ENCODE measurements at regions of chr11 and their contacts with region 1.

Region 1: GRCh38 chr11:14907411-14908213 is 15.6 kb upstream of the CYP2R1 start:
- DNase-seq: peak; percentile 49

Region 2: GRCh38 chr11:14623036-14623435 is 284.6 kb before region 1 on chr11:
- CTCF ChIA-PET with region 1: interaction called, 14 read pairs
- POLR2A ChIA-PET with region 1: no interaction called
- DNase-seq: no peak

Region 3: DNA sequence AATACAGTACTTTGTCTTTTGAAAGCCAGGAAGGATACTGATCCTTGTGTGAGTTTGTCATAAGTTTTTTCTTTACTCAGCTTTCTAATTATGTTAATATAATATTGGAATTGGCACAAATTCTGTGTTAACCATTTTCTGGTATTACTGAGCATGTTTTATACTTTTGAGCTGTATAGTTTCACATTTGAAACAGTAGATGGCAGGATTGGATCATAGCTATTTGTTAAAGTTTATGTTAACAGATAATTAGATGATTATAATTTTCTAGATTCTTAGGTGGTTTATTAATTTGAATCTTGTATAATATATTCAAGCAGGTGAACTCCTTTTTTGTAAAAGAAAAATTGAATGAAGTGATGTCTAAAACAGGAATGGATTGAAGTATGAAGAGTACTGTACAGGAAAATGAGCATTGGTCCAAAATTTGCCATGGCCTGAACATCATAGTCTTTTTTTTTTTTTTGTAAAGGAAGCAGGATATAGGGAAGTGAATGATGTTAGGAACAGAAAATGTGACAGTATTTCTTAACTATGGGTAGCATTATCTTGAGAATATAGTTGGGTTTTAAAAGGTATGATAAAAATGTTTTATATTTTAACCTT is 117.6 kb before region 1 on chr11:
- CTCF ChIA-PET with region 1: interaction called, 74 read pairs
- POLR2A ChIA-PET with region 1: interaction called, 9 read pairs
- DNase-seq: no peak

Region 4: DNA sequence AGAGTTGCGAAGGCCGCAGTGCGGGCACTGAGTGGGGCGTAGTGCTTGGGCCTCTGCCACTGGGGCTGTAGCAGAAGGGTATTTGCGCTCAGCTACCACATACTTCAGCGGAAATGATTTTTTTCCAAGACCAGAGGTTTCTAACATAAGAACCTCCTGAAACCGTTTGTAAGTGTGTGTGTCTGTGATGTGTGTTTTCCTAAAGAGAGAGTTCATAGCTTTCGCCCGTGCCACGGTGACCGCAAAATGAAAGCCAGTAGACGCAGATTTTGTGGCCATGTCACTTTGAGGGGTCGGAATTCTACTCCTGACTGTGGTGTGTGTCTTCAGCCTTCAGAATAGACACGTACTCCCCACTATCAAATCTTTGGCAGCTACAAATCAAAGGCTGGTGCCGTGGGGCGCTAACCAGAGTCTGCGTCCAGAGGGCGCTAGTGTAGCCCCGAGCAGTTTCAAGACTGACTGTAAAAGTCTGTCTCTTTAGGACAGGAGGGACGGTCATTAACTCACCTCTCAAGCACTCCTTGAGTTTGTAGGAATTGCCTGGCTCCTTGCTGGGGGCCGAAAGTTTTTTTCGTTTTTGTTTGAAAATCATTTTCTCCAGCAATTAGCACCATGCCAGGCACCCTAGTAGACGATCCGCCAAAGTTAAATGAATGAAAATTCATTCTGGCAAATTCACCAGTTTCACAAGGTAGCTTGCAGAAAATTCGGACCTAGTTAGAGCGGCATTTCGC is 67.1 kb after region 1 on chr11:
- CTCF ChIA-PET with region 1: interaction called, 11 read pairs
- POLR2A ChIA-PET with region 1: no interaction called
- DNase-seq: peak; percentile 39

Region 5: DNA sequence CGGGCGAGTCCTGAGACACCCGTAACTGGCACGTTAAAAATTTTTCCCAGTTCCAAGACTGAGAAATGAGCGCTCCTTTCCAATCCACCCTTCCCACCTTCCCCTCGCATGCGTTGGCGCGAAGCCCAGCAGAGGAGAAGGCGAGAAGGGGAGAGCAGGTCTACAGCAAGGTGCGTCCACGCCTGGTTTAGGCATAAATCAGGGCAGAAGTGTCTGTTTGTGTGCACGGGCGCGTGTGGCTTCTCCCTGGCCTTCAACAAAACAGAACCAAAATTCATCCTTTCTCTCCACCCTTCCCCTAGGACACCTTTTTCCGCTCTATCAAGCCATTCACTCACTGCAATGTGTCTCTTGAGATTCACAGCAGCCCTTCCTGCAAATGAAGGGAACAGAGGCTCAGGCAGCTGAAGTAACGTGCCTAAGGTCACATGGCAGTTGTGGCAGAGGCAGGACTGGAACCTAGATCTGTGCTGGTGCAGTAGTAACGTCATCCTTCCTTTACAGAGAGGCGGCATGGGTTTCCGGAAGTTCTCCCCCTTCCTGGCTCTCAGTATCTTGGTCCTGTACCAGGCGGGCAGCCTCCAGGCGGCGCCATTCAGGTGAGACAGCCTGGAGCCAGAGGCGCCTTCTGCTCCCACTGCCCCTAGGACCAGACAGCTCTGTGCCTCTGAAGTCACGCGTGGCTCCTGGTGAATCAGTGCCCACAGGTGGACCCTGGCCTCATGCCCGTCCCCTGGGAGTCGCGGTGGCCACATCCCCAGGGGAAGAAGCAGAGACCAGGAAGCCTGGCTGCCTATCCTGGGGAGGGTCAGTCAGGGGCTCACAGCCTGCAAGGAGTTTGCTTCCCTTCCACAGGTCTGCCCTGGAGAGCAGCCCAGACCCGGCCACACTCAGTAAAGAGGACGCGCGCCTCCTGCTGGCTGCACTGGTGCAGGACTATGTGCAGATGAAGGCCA is 166.9 kb after region 1 on chr11:
- CTCF ChIA-PET with region 1: interaction called, 64 read pairs
- POLR2A ChIA-PET with region 1: interaction called, 6 read pairs
- DNase-seq: peak; percentile 75

Region 6: DNA sequence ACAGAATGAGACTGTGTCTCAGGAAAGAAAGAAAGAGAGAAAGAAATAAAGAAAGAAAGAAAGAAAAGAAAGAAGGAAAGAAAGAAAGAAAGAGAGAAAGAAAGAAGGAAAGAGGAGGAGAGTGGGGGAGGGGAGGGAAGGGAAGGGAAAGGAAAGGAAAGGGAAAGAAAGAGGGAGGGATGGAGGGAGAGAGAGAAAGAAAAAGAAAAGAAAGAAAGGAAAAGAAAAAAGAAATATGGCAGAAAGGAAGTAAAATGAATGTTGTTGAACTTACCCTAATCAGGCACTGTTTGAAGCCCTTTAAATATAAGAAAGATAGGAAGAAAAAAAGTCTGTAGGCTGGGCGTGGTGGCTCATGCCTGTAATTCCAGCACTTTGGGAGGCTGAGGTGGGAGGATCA is 483.2 kb after region 1 on chr11:
- CTCF ChIA-PET with region 1: no interaction called
- POLR2A ChIA-PET with region 1: no interaction called
- DNase-seq: no peak

Measured in HEK293T (cell line).